Panc1 (cell line): ENCODE measurements at regions of chr4 and their contacts with region 1.

Region 1: GRCh38 chr4:9762823-9763475 is 18.5 kb upstream of the DRD5 start:
- DNase-seq: peak; percentile 45
- ATAC-seq: no peak
- H3K4me3 ChIP-seq: no peak overlapping the region
- H3K27ac ChIP-seq: no peak overlapping the region
- H3K4me1 ChIP-seq: no peaks in the 10 kb centered on the region
- H3K27me3 ChIP-seq: no peaks in the 10 kb centered on the region
- CTCF ChIP-seq: peak; percentile 67

Region 2: GRCh38 chr4:9845791-9846493 is 83.0 kb after region 1 on chr4:
- CTCF ChIA-PET with region 1: no interaction called
- POLR2A ChIA-PET with region 1: no interaction called
- in situ Hi-C with region 1: no loop called
- intact Hi-C with region 1: no loop called
- DNase-seq: no peak
- ATAC-seq: no peak
- H3K4me3 ChIP-seq: no peak overlapping the region
- H3K27ac ChIP-seq: no peak overlapping the region
- H3K4me1 ChIP-seq: no peaks in the 10 kb centered on the region
- H3K27me3 ChIP-seq: no peaks in the 10 kb centered on the region
- CTCF ChIP-seq: no peak

Region 3: GRCh38 chr4:10013722-10014121 is 250.8 kb after region 1 on chr4:
- CTCF ChIA-PET with region 1: interaction called, 13 read pairs
- POLR2A ChIA-PET with region 1: no interaction called
- in situ Hi-C with region 1: no loop called
- intact Hi-C with region 1: loop called (anchors 1 kb)
- DNase-seq: no peak
- ATAC-seq: peak; percentile 90
- H3K4me3 ChIP-seq: no peak overlapping the region
- H3K27ac ChIP-seq: peak overlapping the region; percentile 76
- H3K4me1 ChIP-seq: peaks cover 32% of the 10 kb centered on the region
- H3K27me3 ChIP-seq: no peaks in the 10 kb centered on the region
- CTCF ChIP-seq: peak; percentile 70

Region 4: GRCh38 chr4:10492464-10492863 is 729.5 kb after region 1 on chr4:
- CTCF ChIA-PET with region 1: no interaction called
- POLR2A ChIA-PET with region 1: no interaction called
- in situ Hi-C with region 1: no loop called
- intact Hi-C with region 1: no loop called
- DNase-seq: no peak
- ATAC-seq: no peak
- H3K4me3 ChIP-seq: no peak overlapping the region
- H3K27ac ChIP-seq: no peak overlapping the region
- H3K4me1 ChIP-seq: no peaks in the 10 kb centered on the region
- H3K27me3 ChIP-seq: no peaks in the 10 kb centered on the region
- CTCF ChIP-seq: no peak